ENCODE measurements at regions of chr21 and their contacts with region 1.

Region 1: DNA sequence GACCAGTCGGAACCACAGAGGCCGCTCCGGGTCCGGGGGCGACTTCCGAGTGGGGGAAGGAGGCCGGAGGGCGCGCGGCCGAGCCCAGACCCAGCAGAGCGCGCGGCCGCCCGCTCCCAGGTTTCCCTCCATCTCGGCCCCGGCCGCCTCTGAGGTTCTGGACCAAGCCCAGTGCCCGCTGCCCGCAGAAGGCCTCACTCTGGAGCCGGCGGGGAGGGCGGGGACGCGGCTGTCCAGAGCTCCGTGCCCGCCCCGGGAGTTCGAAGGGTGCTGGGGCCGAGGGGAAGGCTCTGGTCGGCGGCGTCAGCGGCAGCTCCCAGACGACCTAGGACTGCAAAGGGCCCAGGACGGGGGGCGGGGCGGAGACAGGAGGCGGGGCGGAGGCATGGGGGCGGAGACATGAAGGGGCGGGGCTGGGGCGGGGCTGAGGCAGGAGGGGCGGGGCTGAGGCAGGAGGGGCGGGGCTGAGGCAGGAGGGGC is 48.0 kb upstream of the SLC19A1 start:
- DNase-seq: peak; percentile 91
- H3K4me3 Mint-ChIP-seq: peak overlapping the region; percentile 58
- H3K27ac Mint-ChIP-seq: no peak overlapping the region
- H3K4me1 Mint-ChIP-seq: peaks cover 12% of the 10 kb centered on the region
- H3K27me3 Mint-ChIP-seq: peaks cover 22% of the 10 kb centered on the region

Region 2: DNA sequence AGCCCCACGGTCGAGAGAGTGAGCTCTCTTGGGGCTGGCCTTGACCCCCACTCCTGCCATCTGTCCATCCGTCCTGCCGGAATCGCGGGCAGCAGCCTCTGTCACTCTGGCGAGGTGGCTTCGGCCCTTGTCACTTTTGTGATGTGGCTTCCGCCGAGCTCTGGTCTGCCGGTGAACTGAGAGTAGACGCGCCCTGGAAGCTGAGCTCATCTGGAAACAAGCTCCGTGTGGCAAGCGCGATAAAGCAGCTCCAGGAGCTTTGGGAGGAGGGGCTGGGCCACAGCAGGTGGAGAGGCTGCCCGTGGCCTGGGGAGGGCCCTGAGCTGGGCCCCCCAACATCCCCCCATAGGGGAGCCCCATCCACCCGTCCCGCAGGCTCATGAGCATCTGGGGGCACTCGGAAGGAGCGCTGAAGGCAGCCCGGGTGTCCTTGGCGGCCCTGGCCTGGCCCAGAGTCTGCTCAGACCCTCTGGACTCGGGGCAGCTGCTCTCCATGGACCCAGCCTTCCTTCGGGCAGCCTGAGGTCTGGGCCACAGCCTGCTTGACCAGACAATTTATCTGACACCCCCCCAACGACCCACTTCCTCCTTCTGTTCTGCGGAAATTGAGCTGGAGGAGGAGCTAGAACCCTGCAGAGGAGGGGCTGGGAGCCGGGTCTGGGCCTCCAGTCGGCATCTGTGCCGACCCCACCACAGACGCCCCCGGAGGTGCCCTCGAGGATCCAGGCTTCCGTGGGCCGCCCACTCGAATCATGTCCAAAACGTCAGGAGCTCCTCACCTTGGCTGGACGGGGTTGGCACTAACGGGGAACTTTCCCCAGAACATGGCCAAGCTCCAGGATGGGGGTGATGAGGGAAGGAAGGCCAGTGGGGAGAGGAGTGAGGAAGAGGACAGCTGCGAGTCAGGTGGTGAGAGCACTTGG is 107.1 kb before region 1 on chr21:
- intact Hi-C with region 1: no loop called
- DNase-seq: peak; percentile 88
- H3K4me3 Mint-ChIP-seq: peak overlapping the region; percentile 68
- H3K27ac Mint-ChIP-seq: peak overlapping the region; percentile 88
- H3K4me1 Mint-ChIP-seq: peaks cover 25% of the 10 kb centered on the region
- H3K27me3 Mint-ChIP-seq: no peaks in the 10 kb centered on the region

Region 3: GRCh38 chr21:45615145-45615711 is 24.9 kb after region 1 on chr21:
- intact Hi-C with region 1: loop called (anchors 2 kb)
- DNase-seq: peak; percentile 91
- H3K4me3 Mint-ChIP-seq: peak overlapping the region; percentile 83
- H3K27ac Mint-ChIP-seq: peak overlapping the region; percentile 64
- H3K4me1 Mint-ChIP-seq: peaks cover 15% of the 10 kb centered on the region
- H3K27me3 Mint-ChIP-seq: peaks cover 37% of the 10 kb centered on the region

Region 4: GRCh38 chr21:45643021-45643980 is 53.0 kb after region 1 on chr21 and contains the start of gene PCBP3:
- intact Hi-C with region 1: loop called (anchors 1 kb)
- DNase-seq: peak; percentile 98
- H3K4me3 Mint-ChIP-seq: peak within 1 kb of the TSS; percentile 82
- H3K27ac Mint-ChIP-seq: peak within 1 kb of the TSS; percentile 64
- H3K4me1 Mint-ChIP-seq: peaks cover 16% of the 10 kb centered on the region
- H3K27me3 Mint-ChIP-seq: peaks cover 11% of the 10 kb centered on the region
- total RNA-seq, gene PCBP3: 7.5 and 9.7 TPM in 2 replicates

Region 5: DNA sequence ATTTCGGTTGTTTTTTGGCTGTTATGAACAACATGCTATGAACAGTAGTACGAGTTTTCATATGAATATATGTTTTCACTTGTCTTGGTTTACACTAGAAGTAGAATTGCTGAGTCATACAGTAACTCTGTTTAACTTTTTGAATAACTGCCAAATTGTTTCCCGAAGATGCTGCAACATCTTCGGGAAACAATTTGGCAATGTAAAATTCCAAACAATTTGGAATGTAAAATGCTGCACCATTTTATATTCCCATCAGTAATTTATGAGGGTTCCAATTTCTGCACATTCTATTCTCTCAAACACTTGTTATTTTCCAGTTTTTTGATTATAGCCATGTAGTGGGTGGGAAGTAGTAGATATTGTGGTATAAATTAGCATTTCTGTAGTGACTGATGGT is 64.8 kb after region 1 on chr21:
- intact Hi-C with region 1: no loop called
- DNase-seq: no peak
- H3K4me3 Mint-ChIP-seq: no peak overlapping the region
- H3K27ac Mint-ChIP-seq: no peak overlapping the region
- H3K4me1 Mint-ChIP-seq: peaks cover 12% of the 10 kb centered on the region
- H3K27me3 Mint-ChIP-seq: no peaks in the 10 kb centered on the region

Region 6: GRCh38 chr21:45768751-45769070 is 178.4 kb after region 1 on chr21:
- intact Hi-C with region 1: loop called (anchors 1 kb)
- DNase-seq: peak; percentile 71
- H3K4me3 Mint-ChIP-seq: peak overlapping the region; percentile 63
- H3K27ac Mint-ChIP-seq: peak overlapping the region; percentile 92
- H3K4me1 Mint-ChIP-seq: peaks cover 43% of the 10 kb centered on the region
- H3K27me3 Mint-ChIP-seq: no peaks in the 10 kb centered on the region

Measured in activated CD4-positive, alpha-beta T cell treated with anti-CD3 and anti-CD28 coated beads, Interleukin-2, amount 10 ng/mL, durations not matched to agents 24 days and 14 days (primary cell).